Tibial artery (tissue), 4 donors: ENCODE measurements at regions of chr4 and their contacts with region 1.

Region 1: DNA sequence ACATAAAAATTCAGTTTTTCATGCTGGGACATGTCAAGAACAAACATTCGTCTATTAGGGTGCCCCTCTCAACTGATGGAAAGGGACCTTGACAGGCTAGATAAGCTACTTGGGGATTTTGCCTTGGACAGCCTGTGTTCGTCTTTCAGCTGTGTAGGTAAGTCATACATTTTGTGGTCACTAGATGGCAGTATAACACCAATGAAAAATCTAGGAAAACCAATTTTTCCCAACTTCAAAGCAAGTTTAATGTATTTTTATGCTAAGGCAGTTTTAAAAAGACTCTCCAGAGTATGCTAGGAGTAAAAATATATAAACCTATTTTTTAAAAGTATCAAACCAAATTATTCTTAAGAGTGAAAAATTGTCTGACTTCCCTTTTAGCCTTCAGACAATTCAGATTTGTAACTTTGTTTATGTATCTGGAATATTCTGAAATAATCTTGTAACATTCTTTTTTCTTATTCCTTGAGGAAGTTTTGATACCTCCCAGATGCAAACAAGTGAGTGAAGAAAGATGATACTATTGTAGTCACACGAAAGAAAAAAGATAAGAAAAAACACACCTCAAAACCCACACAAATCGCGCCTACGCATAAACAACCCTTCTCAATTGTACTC is 158.3 kb downstream of the CPE start:
- DNase-seq: no peak
- H3K4me3 ChIP-seq: no peak overlapping the region
- H3K27ac ChIP-seq: no peak overlapping the region
- H3K4me1 ChIP-seq: no peaks in the 10 kb centered on the region
- H3K27me3 ChIP-seq: no peaks in the 10 kb centered on the region
- CTCF ChIP-seq: peak; percentile 63 to 76

Region 2: GRCh38 chr4:166091912-166092510 is 554.9 kb after region 1 on chr4:
- intact Hi-C with region 1: loop called (anchors 5 kb)
- DNase-seq: no peak
- H3K4me3 ChIP-seq: no peak overlapping the region
- H3K27ac ChIP-seq: no peak overlapping the region
- H3K4me1 ChIP-seq: no peaks in the 10 kb centered on the region
- H3K27me3 ChIP-seq: peaks cover 0 to 3% of the 10 kb centered on the region in 2 donors
- CTCF ChIP-seq: peak; percentile 74